ENCODE measurements at regions of chr10 and their contacts with region 1.

Region 1: DNA sequence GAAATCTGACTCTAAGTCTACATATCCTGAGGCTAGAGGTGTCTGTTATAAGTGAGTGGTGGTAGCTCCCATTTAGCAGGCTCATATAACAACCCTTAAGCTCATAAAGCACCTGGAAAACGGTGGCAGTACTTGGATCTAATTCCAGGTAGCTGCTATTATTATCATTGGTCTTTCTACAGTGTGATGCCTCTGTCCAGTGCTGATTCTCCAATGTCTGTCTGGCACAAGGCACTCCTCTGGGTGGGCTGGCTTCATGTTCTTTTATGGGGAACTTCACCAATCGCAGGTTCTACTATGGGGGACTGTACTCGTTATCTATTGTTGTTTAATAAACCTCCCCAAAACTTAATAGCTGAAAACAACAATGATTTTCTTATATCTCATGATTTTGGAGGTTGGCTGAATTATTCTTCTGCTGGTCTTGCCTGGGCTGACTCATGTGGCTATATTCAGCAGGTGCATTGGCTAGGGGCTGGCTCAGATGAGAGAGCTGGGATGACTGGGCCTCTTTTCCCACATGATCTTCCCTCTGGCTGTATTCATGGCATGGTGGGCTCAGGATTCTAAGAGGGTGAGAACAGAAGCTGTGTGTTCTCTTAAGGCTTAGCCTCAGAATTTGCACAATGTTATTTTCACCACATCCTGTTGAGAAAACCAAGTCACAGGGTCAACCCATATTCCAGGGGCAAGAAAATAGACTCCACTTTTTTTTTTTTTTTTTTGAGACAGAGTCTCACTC is 93.0 kb upstream of the PCGF5 start:
- DNase-seq: no peak
- CTCF ChIP-seq: no peak

Region 2: DNA sequence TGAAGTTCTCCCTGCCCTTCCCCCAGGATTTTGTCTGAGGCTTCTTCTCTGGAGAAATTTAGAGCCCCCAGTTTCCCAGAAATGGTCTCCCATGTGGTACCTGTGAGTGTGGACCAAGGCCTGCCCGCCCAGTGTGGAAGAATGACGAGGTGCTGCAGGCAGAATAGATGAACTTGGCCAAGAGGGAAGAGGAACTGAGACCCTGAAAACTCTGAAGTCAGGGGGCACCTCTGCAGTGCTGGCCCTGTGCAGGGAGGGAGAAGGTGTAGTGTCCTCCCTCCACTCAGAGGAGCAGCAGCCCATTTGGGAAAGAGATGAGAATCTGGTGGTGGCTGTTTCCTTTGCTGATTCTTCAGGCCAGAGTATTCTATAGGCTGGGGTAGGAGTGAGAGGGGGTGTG is 22.2 kb before region 1 on chr10:
- CTCF ChIA-PET with region 1: no interaction called
- POLR2A ChIA-PET with region 1: no interaction called
- DNase-seq: no peak
- CTCF ChIP-seq: no peak

Region 3: GRCh38 chr10:91117505-91117904 is 10.0 kb before region 1 on chr10:
- CTCF ChIA-PET with region 1: interaction called, 14 read pairs
- POLR2A ChIA-PET with region 1: no interaction called
- DNase-seq: no peak
- CTCF ChIP-seq: no peak

Region 4: DNA sequence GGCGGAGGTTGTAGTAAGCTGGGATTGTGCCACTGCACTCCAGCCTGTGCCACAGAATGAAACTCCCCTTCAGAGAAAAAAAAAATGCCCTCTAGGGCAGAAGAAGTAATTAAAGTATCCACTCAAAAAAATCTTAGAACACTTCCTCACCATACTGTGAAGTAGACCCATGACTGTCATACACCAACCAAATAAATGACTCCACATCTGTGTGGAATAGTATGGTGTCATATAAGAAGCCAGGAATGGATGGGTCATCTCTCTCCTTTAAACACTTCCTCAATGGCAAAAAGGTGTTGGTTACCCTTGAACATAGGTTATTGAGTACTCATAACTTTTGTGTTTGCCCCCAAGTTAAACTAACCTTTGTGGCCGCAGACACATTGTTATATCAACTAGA is 44.8 kb after region 1 on chr10:
- CTCF ChIA-PET with region 1: no interaction called
- POLR2A ChIA-PET with region 1: no interaction called
- DNase-seq: no peak
- CTCF ChIP-seq: no peak